Ascending aorta (tissue), 2 donors: ENCODE measurements at regions of chr19 and their contacts with region 1.

Region 1: GRCh38 chr19:19663256-19664038 is at the start of gene ATP13A1:
- DNase-seq: peak; percentile 87 to 99
- H3K4me3 ChIP-seq: peak within 1 kb of the TSS; percentile 80 to 92
- H3K27ac ChIP-seq: peak within 1 kb of the TSS; percentile 88 to 93
- H3K4me1 ChIP-seq: peaks cover 6 to 17% of the 10 kb centered on the region in 2 donors
- H3K27me3 ChIP-seq: no peaks in the 10 kb centered on the region
- CTCF ChIP-seq: no peak
- total RNA-seq, gene ATP13A1: 161 TPM

Region 2: GRCh38 chr19:19578252-19578651 is 85.2 kb before region 1 on chr19:
- intact Hi-C with region 1: no loop called
- DNase-seq: no peak
- H3K4me3 ChIP-seq: no peak overlapping the region
- H3K27ac ChIP-seq: no peak overlapping the region
- H3K4me1 ChIP-seq: no peaks in the 10 kb centered on the region
- H3K27me3 ChIP-seq: no peaks in the 10 kb centered on the region
- CTCF ChIP-seq: no peak

Region 3: DNA sequence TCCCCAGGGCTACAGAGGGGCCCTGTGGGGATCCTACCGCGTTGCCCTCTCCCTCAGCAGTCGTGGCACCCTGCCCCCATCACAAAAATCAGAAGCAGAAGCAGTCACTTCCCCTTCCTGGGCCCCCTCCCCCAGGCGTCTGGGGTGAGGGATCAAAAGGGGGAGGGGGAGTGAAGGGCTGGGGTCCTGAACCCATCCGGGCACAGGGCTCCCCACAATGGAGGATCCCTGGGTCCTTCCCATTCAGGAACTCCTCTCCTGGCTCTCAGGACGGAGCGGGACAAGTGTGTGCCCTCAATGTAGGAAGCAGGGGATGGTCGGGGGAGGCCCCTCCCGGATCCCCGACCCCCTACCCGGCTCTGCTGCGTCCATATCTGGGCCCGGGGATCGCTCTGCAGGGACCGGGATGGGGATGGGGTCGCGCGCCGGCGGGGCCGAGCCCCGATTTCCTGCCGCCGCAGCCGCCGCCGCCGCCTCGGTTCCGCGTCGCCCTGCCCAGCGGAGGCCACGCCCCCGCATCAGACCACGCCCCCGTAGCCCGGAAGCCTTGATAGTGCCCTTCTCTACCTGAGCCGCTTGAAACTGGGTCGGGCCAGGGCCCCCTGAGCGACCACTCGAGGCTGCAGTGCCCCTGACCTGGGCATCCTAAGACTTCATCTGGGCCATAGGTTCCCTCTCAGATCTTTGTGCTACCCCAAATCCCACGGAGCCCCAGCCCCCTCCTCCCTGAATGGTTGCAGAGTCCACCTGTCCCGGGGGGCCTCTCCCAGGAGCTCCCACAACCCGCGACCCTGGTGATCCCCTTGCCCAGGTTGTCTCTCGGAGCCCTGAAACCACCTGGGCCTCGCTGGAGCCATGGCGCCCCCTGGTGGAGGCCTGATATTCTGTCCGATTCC is 20.0 kb before region 1 on chr19 and contains the start of gene GMIP:
- intact Hi-C with region 1: loop called (anchors 1 kb)
- DNase-seq: peak in 1 of 2 donors; percentile 83
- H3K4me3 ChIP-seq: peak within 1 kb of the TSS; percentile 90 to 98
- H3K27ac ChIP-seq: peak within 1 kb of the TSS; percentile 49 to 61
- H3K4me1 ChIP-seq: peaks cover 0 to 10% of the 10 kb centered on the region in 2 donors
- H3K27me3 ChIP-seq: no peaks in the 10 kb centered on the region
- CTCF ChIP-seq: peak; percentile 57 to 96 (median 87)
- total RNA-seq, gene GMIP: 3.9 TPM

Region 4: GRCh38 chr19:19677579-19677978 is 14.1 kb after region 1 on chr19:
- intact Hi-C with region 1: no loop called
- DNase-seq: no peak
- H3K4me3 ChIP-seq: no peak overlapping the region
- H3K27ac ChIP-seq: no peak overlapping the region
- H3K4me1 ChIP-seq: no peaks in the 10 kb centered on the region
- H3K27me3 ChIP-seq: no peaks in the 10 kb centered on the region
- CTCF ChIP-seq: no peak

Region 5: DNA sequence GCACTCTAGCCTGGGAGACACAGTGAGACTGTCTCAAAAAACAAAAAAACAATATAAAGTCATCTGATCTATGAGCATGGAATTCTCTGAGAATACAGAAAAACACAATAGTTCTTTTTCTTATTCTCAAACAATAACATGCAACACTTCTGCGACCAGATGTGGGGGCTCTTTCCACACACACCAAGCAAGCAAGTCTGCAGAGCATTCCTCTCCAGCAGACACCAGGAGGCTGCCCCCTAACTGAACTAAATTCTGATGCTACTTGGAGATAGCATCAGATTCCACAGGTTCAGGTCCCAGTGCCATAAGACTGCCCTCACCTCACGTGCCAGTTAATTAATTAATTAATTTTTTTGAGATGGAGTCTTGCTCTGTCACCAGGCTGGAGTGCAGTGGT is 32.9 kb after region 1 on chr19:
- intact Hi-C with region 1: no loop called
- DNase-seq: no peak
- H3K4me3 ChIP-seq: no peak overlapping the region
- H3K27ac ChIP-seq: no peak overlapping the region
- H3K4me1 ChIP-seq: no peaks in the 10 kb centered on the region
- H3K27me3 ChIP-seq: no peaks in the 10 kb centered on the region
- CTCF ChIP-seq: no peak

Region 6: DNA sequence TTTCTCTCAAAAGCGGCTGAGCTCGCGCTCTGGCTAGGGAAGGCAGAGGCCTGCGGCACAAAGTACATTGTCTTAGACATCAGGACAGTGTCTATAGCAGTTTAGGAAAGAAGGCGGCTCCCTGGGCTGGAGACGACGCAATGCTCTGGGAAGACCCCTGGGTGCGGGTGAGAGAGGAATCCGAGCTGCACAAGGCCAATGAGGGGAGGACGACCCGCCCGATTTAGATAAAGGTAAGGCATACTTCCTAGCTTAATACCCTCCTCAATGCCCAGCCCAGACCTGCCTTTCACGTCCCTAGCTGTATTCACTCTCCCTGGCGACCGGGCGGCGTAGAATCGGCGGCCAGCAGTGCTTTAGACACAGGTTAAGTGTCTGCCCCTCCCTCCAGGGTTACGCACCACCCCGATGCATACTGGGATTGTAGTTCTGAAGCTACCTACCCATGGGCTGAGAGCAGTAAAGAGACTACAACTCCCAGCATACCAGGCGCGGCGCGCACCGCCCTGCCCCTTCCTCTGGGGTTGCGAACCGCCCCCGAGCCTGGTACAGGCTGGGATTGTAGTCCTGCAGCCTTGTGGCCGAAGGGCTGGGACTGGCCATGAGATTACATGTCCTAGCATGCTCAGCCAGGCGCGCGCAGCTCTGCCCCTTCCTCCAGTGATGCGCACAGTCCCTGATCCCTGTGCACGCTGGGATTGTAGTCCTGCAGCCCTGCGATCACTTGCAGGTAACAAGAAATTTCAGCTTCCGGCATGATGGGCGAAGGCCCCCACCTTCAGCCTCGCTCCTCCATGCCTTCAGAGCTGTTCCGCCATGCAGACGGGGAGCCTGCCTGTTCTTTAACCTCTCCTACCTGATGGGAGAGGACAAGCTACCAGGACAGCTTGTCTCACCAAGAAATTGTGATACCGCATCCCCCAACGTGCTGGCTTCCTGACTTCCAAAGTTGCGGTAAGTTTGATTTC is 112.9 kb after region 1 on chr19:
- intact Hi-C with region 1: loop called (anchors 1 kb)
- DNase-seq: peak; percentile 97 to 100
- H3K4me3 ChIP-seq: peak overlapping the region; percentile 71 to 82
- H3K27ac ChIP-seq: peak overlapping the region; percentile 50 to 56
- H3K4me1 ChIP-seq: peaks cover 5 to 11% of the 10 kb centered on the region in 2 donors
- H3K27me3 ChIP-seq: no peaks in the 10 kb centered on the region
- CTCF ChIP-seq: no peak

Region 7: DNA sequence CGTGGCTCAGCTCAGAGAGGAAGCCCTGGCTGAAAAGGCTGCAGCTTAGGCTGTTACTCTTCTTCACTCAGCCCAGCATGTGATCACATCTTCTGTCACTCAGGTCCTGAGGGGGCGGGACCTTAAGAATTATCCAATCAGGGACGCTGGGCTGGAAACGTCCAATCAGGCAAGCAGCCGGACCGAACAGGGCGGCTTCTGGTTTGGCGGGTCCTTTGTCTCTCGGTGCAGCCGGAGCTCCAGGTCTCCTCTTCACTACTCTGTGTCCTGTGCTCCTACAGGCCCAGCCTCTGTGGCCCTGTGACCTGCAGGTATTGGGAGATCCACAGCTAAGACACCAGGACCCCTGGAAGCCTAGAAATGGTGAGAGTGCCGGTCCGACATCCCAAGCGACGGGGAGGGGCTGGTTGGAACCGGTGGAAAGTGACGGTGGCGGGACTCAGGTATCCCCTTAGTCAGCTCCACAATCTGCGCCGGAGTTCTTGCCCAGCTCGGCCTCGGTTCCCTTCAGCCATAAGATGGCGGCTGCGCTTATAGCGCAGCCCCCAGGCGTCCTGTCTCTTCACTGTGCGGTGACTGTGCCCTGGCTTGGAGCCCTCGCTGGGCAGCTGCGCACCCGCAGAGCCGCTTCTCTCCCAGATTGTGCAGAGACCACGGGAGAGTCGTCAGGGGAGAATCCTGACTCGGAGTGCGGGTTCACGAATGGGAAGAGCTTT is 237.4 kb after region 1 on chr19 and contains the start of gene ZNF93:
- intact Hi-C with region 1: loop called (anchors 5 kb)
- DNase-seq: peak; percentile 92 to 97
- H3K4me3 ChIP-seq: peak within 1 kb of the TSS; percentile 80 to 82
- H3K27ac ChIP-seq: peak within 1 kb of the TSS; percentile 68 to 77
- H3K4me1 ChIP-seq: peaks cover 0 to 2% of the 10 kb centered on the region in 2 donors
- H3K27me3 ChIP-seq: no peaks in the 10 kb centered on the region
- CTCF ChIP-seq: no peak
- total RNA-seq, gene ZNF93: 2.9 TPM

Region 8: GRCh38 chr19:20051841-20052768 is 388.7 kb after region 1 on chr19:
- intact Hi-C with region 1: loop called (anchors 5 kb)
- DNase-seq: peak; percentile 91 to 98
- H3K4me3 ChIP-seq: peak overlapping the region; percentile 74
- H3K27ac ChIP-seq: peak overlapping the region; percentile 75 to 76
- H3K4me1 ChIP-seq: no peaks in the 10 kb centered on the region
- H3K27me3 ChIP-seq: no peaks in the 10 kb centered on the region
- CTCF ChIP-seq: peak in 1 of 3 experiments; percentile 18